ENCODE measurements at regions of chr12 and their contacts with region 1.

Region 1: GRCh38 chr12:62192180-62192902 is 67.9 kb upstream of the USP15 start:
- DNase-seq: peak; percentile 54 to 68
- H3K4me3 ChIP-seq: no peak overlapping the region
- H3K4me3 Mint-ChIP-seq: no peak overlapping the region
- H3K27ac Mint-ChIP-seq: no peak overlapping the region
- H3K4me1 ChIP-seq: no peaks in the 10 kb centered on the region
- H3K4me1 Mint-ChIP-seq: no peaks in the 10 kb centered on the region
- H3K27me3 ChIP-seq: no peaks in the 10 kb centered on the region; the same call in 1 of the 2 replicates
- H3K27me3 Mint-ChIP-seq: peaks cover 7% of the 10 kb centered on the region
- CTCF ChIP-seq: peak; percentile 58 to 73

Region 2: GRCh38 chr12:60684988-60685655 is 1507.2 kb before region 1 on chr12:
- CTCF ChIA-PET with region 1: no interaction called
- POLR2A ChIA-PET with region 1: no interaction called
- intact Hi-C with region 1: loop called (anchors 2 kb)
- DNase-seq: peak in 1 of 2 experiments; percentile 7
- H3K4me3 ChIP-seq: no peak overlapping the region
- H3K4me3 Mint-ChIP-seq: no peak overlapping the region
- H3K27ac Mint-ChIP-seq: no peak overlapping the region
- H3K4me1 ChIP-seq: no peaks in the 10 kb centered on the region
- H3K4me1 Mint-ChIP-seq: no peaks in the 10 kb centered on the region
- H3K27me3 ChIP-seq: no peaks in the 10 kb centered on the region
- H3K27me3 Mint-ChIP-seq: no peaks in the 10 kb centered on the region
- CTCF ChIP-seq: peak in 1 of 2 experiments; percentile 50

Region 3: DNA sequence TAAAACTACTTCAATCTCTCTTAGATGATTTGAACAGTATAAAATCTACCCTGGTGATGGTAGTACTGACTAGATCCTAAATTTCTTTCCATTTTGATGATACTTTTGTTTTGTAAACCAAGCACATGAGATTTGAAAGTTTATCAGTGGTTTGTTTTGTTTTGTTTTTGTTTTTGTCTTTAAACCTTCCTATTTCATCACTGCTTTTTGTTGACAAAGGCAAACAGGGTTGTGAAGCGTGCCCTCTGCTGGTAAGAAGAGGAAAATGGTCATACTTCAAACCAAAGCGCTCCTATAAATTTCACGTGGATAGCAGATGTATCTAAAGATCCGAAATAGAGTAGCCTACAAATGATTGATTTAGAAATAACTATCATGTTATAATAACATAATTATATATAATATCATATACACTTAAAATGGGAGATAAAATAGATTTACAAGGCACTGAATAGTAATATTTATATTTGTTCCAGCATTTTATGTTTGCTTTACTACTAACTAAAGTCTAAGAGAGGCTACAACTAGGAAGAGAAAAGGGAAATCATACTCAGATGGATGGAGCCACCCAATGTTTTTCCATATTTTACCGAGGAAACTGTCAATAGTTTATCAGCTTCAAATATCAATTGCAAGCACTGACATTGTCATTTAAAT is 186.1 kb before region 1 on chr12:
- CTCF ChIA-PET with region 1: no interaction called
- POLR2A ChIA-PET with region 1: no interaction called
- intact Hi-C with region 1: loop called (anchors 1 kb)
- DNase-seq: peak in 1 of 2 experiments; percentile 37
- H3K4me3 ChIP-seq: no peak overlapping the region
- H3K4me3 Mint-ChIP-seq: no peak overlapping the region
- H3K27ac Mint-ChIP-seq: no peak overlapping the region
- H3K4me1 ChIP-seq: 0 out of 2 replicates have a peak, but pooled peaks cover 4% of the 10 kb centered on the region
- H3K4me1 Mint-ChIP-seq: no peaks in the 10 kb centered on the region
- H3K27me3 ChIP-seq: no peaks in the 10 kb centered on the region
- H3K27me3 Mint-ChIP-seq: peaks cover 5% of the 10 kb centered on the region
- CTCF ChIP-seq: peak; percentile 64 to 76

Region 4: DNA sequence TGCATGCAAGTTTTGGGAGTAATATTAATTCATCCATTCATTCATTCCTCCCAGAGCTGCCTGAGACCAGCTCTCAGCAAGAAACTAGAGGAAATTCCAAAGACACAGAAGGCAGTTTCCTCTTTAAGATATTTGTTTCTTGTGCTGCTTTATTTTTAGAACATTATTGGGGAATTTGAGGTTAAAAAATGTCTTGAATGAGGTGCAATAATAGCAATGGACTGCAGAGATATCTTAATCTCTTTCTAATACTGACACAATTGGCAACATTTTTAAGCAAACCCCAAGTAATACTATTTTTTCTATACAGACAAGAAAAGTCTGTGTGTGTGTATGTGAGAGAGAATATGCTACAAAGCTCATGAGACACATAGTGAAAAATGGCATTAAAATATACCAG is 122.4 kb before region 1 on chr12:
- CTCF ChIA-PET with region 1: no interaction called
- POLR2A ChIA-PET with region 1: no interaction called
- intact Hi-C with region 1: no loop called
- DNase-seq: no peak
- H3K4me3 ChIP-seq: no peak overlapping the region
- H3K4me3 Mint-ChIP-seq: no peak overlapping the region
- H3K27ac Mint-ChIP-seq: no peak overlapping the region
- H3K4me1 ChIP-seq: no peaks in the 10 kb centered on the region; the same call in 1 of the 2 replicates
- H3K4me1 Mint-ChIP-seq: no peaks in the 10 kb centered on the region
- H3K27me3 ChIP-seq: no peaks in the 10 kb centered on the region
- H3K27me3 Mint-ChIP-seq: peaks cover 7% of the 10 kb centered on the region
- CTCF ChIP-seq: no peak

Region 5: GRCh38 chr12:62123721-62124203 is 68.6 kb before region 1 on chr12:
- CTCF ChIA-PET with region 1: no interaction called
- POLR2A ChIA-PET with region 1: no interaction called
- intact Hi-C with region 1: loop called (anchors 2 kb)
- DNase-seq: peak; percentile 36 to 51
- H3K4me3 ChIP-seq: no peak overlapping the region
- H3K4me3 Mint-ChIP-seq: no peak overlapping the region
- H3K27ac Mint-ChIP-seq: no peak overlapping the region
- H3K4me1 ChIP-seq: no peaks in the 10 kb centered on the region
- H3K4me1 Mint-ChIP-seq: no peaks in the 10 kb centered on the region
- H3K27me3 ChIP-seq: no peaks in the 10 kb centered on the region
- H3K27me3 Mint-ChIP-seq: peaks cover 12% of the 10 kb centered on the region
- CTCF ChIP-seq: peak; percentile 48 to 87

Region 6: DNA sequence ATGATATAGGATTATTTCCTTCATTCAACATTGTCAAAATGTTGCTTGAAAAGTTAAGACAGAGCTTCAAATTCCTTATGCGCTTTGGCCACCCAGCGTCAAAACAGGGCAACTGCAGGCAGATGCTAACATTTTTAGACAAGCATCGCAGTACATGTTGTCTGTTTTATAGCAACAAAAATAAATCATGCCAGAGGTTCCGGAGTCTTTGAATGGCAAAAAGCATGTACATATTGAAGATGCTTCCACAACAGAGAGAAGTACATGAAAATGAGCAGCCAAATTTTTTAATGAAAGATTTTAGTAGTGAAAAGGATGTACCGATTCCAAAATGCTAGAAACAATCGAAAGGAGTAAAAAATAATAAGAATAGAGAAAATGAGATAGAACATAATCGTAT is 18.1 kb after region 1 on chr12:
- CTCF ChIA-PET with region 1: interaction called, 5 read pairs
- POLR2A ChIA-PET with region 1: no interaction called
- intact Hi-C with region 1: loop called (anchors 1 kb)
- DNase-seq: peak in 1 of 2 experiments; percentile 34
- H3K4me3 ChIP-seq: no peak overlapping the region
- H3K4me3 Mint-ChIP-seq: no peak overlapping the region
- H3K27ac Mint-ChIP-seq: no peak overlapping the region
- H3K4me1 ChIP-seq: peaks cover 7% of the 10 kb centered on the region
- H3K4me1 Mint-ChIP-seq: no peaks in the 10 kb centered on the region
- H3K27me3 ChIP-seq: no peaks in the 10 kb centered on the region
- H3K27me3 Mint-ChIP-seq: peaks cover 3% of the 10 kb centered on the region
- CTCF ChIP-seq: peak; percentile 64 to 83